ENCODE measurements at regions of chr7 and their contacts with region 1.

Region 1: DNA sequence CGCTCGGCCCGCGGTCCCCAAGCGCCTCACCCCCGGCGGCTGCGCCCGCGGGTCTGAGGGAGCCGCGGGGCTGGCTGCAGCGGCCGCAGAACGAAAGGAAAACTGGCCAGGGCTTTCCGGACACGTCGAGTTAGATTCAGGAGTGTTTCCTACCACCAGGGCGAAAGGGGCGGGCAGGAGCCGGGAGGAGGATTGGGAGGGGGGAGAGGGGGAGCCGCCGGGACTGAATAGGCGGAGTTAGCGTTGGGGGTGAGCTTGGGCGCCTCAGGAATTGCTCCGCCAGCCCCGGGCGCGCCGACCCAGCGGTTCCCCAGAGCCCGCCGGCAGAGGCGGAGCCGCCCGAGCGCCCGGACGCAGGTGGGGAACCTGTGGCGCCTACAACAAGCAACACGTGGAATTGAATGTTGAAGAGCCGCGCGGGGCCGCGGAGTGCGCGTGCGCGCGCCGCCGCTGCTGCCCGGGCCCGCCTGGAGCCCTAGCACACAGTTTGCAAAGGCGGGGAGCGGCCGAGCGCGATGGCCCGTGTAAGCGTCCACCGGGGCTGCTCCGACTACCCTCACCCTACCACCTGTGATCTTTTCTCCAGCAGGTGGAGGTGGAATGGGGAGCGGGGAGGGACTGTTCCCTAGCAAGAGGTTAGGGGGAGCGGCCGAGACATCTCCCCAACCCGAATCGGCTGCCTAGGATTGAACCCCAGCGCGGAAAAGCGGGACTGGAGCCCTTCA is at the start of gene CADPS2:
- DNase-seq: peak; percentile 85
- H3K4me3 ChIP-seq: peak within 1 kb of the TSS; percentile 91
- H3K27ac ChIP-seq: peak within 1 kb of the TSS; percentile 95
- H3K4me1 ChIP-seq: peaks cover 60% of the 10 kb centered on the region
- H3K27me3 ChIP-seq: no peaks in the 10 kb centered on the region
- CTCF ChIP-seq: peak; percentile 54
- total RNA-seq, gene CADPS2: 11.9 TPM

Region 2: GRCh38 chr7:122628651-122629411 is 257.7 kb before region 1 on chr7:
- intact Hi-C with region 1: no loop called
- DNase-seq: no peak
- H3K4me3 ChIP-seq: no peak overlapping the region
- H3K27ac ChIP-seq: no peak overlapping the region
- H3K4me1 ChIP-seq: no peaks in the 10 kb centered on the region
- H3K27me3 ChIP-seq: no peaks in the 10 kb centered on the region
- CTCF ChIP-seq: no peak

Region 3: GRCh38 chr7:122803323-122803722 is 83.2 kb before region 1 on chr7:
- intact Hi-C with region 1: loop called (anchors 10 kb)
- DNase-seq: no peak
- H3K4me3 ChIP-seq: no peak overlapping the region
- H3K27ac ChIP-seq: peak overlapping the region; percentile 88
- H3K4me1 ChIP-seq: peaks cover 37% of the 10 kb centered on the region
- H3K27me3 ChIP-seq: no peaks in the 10 kb centered on the region
- CTCF ChIP-seq: peak; percentile 74

Region 4: GRCh38 chr7:123154231-123154860 is 267.8 kb after region 1 on chr7:
- intact Hi-C with region 1: loop called (anchors 5 kb)
- DNase-seq: peak; percentile 28
- H3K4me3 ChIP-seq: no peak overlapping the region
- H3K27ac ChIP-seq: no peak overlapping the region
- H3K4me1 ChIP-seq: peaks cover 3% of the 10 kb centered on the region
- H3K27me3 ChIP-seq: no peaks in the 10 kb centered on the region
- CTCF ChIP-seq: peak; percentile 88